Left ventricle myocardium superior (tissue), 1 donor: ENCODE measurements at regions of chr5 and their contacts with region 1.

Region 1: DNA sequence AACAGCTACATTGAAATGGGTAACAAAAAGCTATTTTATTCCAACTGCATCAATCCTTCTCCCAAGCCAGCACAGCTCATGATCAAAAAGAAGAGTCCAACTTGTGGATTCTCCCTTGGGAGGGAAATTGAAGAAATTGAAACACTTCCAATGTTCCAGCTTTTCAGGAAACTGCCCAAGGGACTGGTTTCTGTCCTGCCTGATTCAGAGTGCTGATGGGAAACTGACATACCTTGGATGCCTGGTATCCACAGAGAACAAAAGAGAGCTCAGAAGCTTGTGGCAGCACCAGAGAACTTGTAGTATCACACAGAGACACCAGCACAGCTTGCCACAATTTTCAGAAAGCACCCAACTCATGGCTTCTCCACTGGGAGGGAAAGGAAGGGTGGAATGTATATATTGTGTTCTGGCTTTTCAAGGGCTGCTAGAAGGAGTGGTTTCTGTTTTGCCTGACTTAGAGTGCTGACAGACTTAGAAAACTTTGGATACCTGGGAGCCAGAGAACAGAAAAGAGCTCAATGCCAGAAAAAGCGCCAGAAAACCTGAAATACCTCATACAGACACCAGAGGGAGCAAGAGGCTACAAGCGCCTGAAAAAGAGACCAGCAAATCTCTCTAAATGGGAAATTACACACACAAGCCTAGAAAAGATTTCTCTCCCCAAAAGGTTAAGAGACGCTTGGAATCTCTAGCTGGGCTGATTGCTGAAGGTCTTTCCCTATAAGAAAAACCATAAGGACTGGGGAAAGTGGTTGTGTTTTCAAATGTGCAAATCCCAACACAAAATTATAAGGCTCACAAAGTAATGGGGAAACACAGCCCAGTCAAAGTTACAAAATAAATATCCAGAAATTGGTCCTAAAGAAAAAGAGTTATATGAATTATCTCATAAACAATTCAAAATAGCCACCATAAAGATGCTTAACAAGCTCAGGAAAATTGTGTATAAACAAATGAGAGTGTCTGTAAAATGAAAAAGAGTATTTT is 178.8 kb downstream of the SPOCK1 start:
- DNase-seq: no peak
- ATAC-seq: peak; percentile 48

Region 2: DNA sequence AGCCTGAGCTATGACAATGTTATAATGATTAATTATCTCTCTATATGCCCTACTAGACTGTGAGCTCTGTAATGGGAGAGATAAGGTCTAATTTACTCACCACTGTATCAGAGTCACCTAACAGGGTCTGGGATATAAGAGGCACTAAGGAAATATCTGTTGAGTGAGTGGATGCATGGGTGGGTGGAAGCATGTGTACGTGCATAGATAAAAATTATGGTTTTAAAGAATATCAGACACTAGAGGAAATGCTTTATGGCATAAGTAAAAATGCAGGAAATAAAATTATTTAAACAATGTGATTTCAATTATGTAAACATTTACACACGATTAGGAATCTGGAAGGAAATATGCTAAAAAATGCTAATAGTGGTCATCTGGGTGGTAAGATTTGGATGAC is 40.9 kb after region 1 on chr5:
- intact Hi-C with region 1: no loop called
- DNase-seq: no peak
- ATAC-seq: no peak

Region 3: GRCh38 chr5:137498736-137499505 is 178.6 kb after region 1 on chr5 and contains the start of gene SPOCK1:
- intact Hi-C with region 1: loop called (anchors 5 kb)
- DNase-seq: peak; percentile 91
- ATAC-seq: peak; percentile 96
- total RNA-seq, gene SPOCK1: 14.7 TPM